Mammary epithelial cell (primary cell): ENCODE measurements at regions of chr4 and their contacts with region 1.

Region 1: GRCh38 chr4:72701987-72702819 is 133.2 kb upstream of the ADAMTS3 start:
- DNase-seq: peak; percentile 40
- H3K4me3 ChIP-seq: peak overlapping the region; percentile 39 to 75 (median 57)
- H3K27ac ChIP-seq: no peak overlapping the region
- H3K4me1 ChIP-seq: no peaks in the 10 kb centered on the region
- H3K27me3 ChIP-seq: no peaks in the 10 kb centered on the region
- CTCF ChIP-seq: peak; percentile 68

Region 2: DNA sequence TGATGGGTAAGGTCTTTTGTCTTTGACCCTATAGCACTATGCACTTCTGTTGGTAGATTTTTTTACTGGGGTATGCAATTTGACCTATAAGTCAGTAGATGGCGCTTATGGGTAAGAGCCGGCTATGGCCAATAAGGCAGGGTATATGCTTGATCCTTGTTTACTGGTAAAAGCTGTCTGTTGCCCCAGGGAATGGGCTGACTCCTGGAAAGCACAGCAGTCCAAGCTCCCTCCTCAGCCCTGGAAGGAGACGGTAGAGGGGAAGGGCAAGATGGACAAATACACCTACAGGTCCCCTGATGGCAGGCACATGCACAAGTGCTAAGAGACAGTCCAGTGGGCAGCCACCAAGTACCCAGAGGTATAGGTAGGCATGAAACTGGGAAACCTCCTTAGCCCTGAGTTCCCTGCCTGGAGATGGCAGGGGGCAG is 196.9 kb before region 1 on chr4:
- CTCF ChIA-PET with region 1: no interaction called
- dilution Hi-C with region 1: no loop called
- in situ Hi-C with region 1: no loop called
- intact Hi-C with region 1: loop called (anchors 1 kb)
- DNase-seq: peak; percentile 25
- H3K4me3 ChIP-seq: no peak overlapping the region
- H3K27ac ChIP-seq: no peak overlapping the region
- H3K4me1 ChIP-seq: no peaks in the 10 kb centered on the region
- H3K27me3 ChIP-seq: peaks cover 2% of the 10 kb centered on the region
- CTCF ChIP-seq: peak; percentile 55 to 86